ENCODE measurements at regions of chr15 and their contacts with region 1.

Region 1: GRCh38 chr15:75542386-75542797 is 36.7 kb downstream of the PTPN9 start:
- DNase-seq: no peak
- ATAC-seq: no peak
- H3K4me3 Mint-ChIP-seq: no peak overlapping the region
- H3K27ac Mint-ChIP-seq: no peak overlapping the region
- H3K4me1 Mint-ChIP-seq: peaks cover 12% of the 10 kb centered on the region
- H3K27me3 Mint-ChIP-seq: no peaks in the 10 kb centered on the region

Region 2: DNA sequence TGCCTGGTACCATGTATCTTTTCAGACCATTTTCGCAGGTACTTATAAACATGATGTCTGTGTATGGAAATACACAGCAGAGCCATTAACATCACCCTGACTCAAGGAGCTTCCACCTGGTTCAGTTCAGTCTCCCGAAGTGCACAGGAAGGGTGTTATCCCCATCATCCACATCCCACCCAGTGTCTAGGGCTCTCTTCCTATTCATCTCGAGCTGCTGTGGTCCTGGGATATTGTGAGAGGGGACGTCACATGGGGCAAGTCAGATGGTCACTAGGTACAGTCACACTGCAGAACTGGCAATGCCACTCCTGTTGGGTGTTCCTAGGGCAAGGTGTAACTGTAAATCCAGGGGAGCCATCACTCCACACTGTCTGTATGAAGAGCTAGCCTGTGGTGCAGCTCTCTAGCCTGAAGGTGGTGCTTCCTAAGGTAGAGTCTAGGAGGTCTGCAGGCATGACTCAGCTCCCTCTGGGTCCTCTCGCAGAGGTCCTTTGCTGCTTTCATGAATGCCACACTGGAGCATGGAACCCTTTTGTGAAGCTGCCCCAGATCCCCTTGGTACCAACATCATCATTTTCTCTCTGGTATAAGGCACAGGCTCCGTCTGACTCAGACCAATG is 1398.1 kb before region 1 on chr15:
- CTCF ChIA-PET with region 1: no interaction called
- POLR2A ChIA-PET with region 1: no interaction called
- intact Hi-C with region 1: loop called in 1 of 2 experiments (anchors 5 kb)
- DNase-seq: no peak
- ATAC-seq: no peak
- H3K4me3 Mint-ChIP-seq: no peak overlapping the region
- H3K27ac Mint-ChIP-seq: no peak overlapping the region
- H3K4me1 Mint-ChIP-seq: no peaks in the 10 kb centered on the region
- H3K27me3 Mint-ChIP-seq: peaks cover 44% of the 10 kb centered on the region

Region 3: GRCh38 chr15:75606711-75607699 is 64.6 kb after region 1 on chr15:
- CTCF ChIA-PET with region 1: no interaction called
- POLR2A ChIA-PET with region 1: no interaction called
- intact Hi-C with region 1: loop called in 1 of 2 experiments (anchors 10 kb)
- DNase-seq: peak; percentile 40
- ATAC-seq: peak; percentile 80
- H3K4me3 Mint-ChIP-seq: peak overlapping the region; percentile 22
- H3K27ac Mint-ChIP-seq: peak overlapping the region; percentile 88
- H3K4me1 Mint-ChIP-seq: peaks cover 40% of the 10 kb centered on the region
- H3K27me3 Mint-ChIP-seq: no peaks in the 10 kb centered on the region

Measured in activated CD4-positive, alpha-beta T cell treated with anti-CD3 and anti-CD28 coated beads for 36 hours (primary cell).